GM12878 (cell line): ENCODE measurements at regions of chr4 and their contacts with region 1.

Region 1: DNA sequence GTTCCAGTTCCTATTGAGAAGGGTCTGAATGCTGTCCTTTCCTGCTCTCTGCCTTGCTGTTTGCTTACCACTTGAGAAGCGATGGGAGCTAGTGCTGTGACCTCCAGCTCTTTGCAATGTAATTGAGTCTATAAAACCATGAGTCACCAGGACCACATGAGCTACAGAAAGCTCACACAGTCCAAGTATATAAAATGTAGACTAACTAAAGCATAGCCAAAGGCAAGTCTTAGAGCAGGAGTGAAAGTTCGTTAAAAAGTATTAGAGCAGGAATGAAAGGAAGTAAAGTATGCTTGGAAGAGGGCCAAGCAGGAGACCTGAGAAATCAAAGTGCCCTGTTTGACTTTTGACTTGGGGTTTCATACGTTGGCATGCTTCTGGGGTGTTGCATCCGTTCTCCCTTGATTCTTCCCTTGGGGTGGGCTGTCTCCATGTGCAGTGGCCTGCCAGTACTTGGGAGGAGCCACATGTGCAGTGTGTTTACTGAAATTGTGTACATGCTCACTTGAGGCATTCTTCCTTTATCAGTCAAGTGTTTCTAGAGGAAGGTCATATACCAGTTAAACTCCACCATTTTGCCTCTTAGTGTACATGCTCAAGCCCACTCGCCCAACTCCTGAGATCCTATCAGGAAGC is 71.3 kb upstream of the KIT start:
- DNase-seq: no peak
- ATAC-seq: no peak
- H3K4me3 ChIP-seq: no peak overlapping the region
- H3K27ac ChIP-seq: no peak overlapping the region
- H3K4me1 ChIP-seq: no peaks in the 10 kb centered on the region
- H3K27me3 ChIP-seq: no peaks in the 10 kb centered on the region; a peak in 1 of 4 replicates
- CTCF ChIP-seq: no peak
- EP300 ChIP-seq: no peak
- POLR2A ChIP-seq: no peak
- RAD21 ChIP-seq: no peak

Region 2: DNA sequence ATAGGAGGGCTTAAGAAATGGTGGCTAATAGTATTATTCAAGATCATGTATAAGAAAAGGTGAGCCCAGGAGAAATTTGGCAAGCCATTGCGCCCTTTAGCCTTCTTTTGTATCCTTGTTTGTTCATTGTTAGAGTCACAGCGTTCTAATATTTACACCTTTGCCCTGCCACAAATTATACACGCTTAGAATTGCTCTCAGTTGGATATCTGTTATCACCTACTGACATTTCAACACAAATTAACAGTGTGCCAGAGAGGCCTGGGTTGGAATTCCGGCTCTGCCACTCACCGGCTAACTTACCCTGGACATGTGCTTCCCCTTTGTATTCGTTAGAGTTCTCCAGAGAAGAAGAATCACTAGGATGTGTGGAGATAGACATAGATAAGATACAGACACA is 77.4 kb before region 1 on chr4:
- CTCF ChIA-PET with region 1: no interaction called
- POLR2A ChIA-PET with region 1: no interaction called
- RAD21 ChIA-PET with region 1: no interaction called
- SMC1A ChIA-PET with region 1: no interaction called
- in situ Hi-C with region 1: no loop called
- intact Hi-C with region 1: no loop called
- DNase-seq: no peak
- ATAC-seq: no peak
- H3K4me3 ChIP-seq: no peak overlapping the region
- H3K27ac ChIP-seq: no peak overlapping the region
- H3K4me1 ChIP-seq: no peaks in the 10 kb centered on the region
- H3K27me3 ChIP-seq: no peaks in the 10 kb centered on the region
- CTCF ChIP-seq: no peak
- EP300 ChIP-seq: no peak
- POLR2A ChIP-seq: no peak
- RAD21 ChIP-seq: no peak

Region 3: GRCh38 chr4:54566608-54567007 is 19.8 kb before region 1 on chr4:
- CTCF ChIA-PET with region 1: no interaction called
- POLR2A ChIA-PET with region 1: no interaction called
- RAD21 ChIA-PET with region 1: no interaction called
- SMC1A ChIA-PET with region 1: no interaction called
- in situ Hi-C with region 1: no loop called
- intact Hi-C with region 1: no loop called
- DNase-seq: no peak
- ATAC-seq: peak; percentile 39
- H3K4me3 ChIP-seq: no peak overlapping the region
- H3K27ac ChIP-seq: no peak overlapping the region
- H3K4me1 ChIP-seq: no peaks in the 10 kb centered on the region
- H3K27me3 ChIP-seq: peaks cover 0 to 5% of the 10 kb centered on the region in 2 experiments; a peak in 2 of 4 replicates
- CTCF ChIP-seq: no peak
- EP300 ChIP-seq: no peak
- POLR2A ChIP-seq: no peak
- RAD21 ChIP-seq: no peak

Region 4: GRCh38 chr4:54645830-54646229 is 59.4 kb after region 1 on chr4:
- CTCF ChIA-PET with region 1: no interaction called
- POLR2A ChIA-PET with region 1: no interaction called
- RAD21 ChIA-PET with region 1: no interaction called
- SMC1A ChIA-PET with region 1: no interaction called
- in situ Hi-C with region 1: loop called (anchors 10 kb)
- intact Hi-C with region 1: no loop called
- DNase-seq: no peak
- ATAC-seq: no peak
- H3K4me3 ChIP-seq: no peak overlapping the region
- H3K27ac ChIP-seq: no peak overlapping the region
- H3K4me1 ChIP-seq: no peaks in the 10 kb centered on the region
- H3K27me3 ChIP-seq: no peaks in the 10 kb centered on the region
- CTCF ChIP-seq: no peak
- EP300 ChIP-seq: no peak
- POLR2A ChIP-seq: no peak
- RAD21 ChIP-seq: no peak

Region 5: GRCh38 chr4:54657551-54658251 is 71.3 kb after region 1 on chr4 and contains the start of gene KIT:
- CTCF ChIA-PET with region 1: no interaction called
- POLR2A ChIA-PET with region 1: no interaction called
- RAD21 ChIA-PET with region 1: no interaction called
- SMC1A ChIA-PET with region 1: no interaction called
- in situ Hi-C with region 1: no loop called
- intact Hi-C with region 1: no loop called
- DNase-seq: no peak
- ATAC-seq: no peak
- H3K4me3 ChIP-seq: peak within 1 kb of the TSS; percentile 16; the same call in 1 of the 2 replicates
- H3K27ac ChIP-seq: no peak within 1 kb of the TSS
- H3K4me1 ChIP-seq: no peaks in the 10 kb centered on the region
- H3K27me3 ChIP-seq: peaks cover 13 to 22% of the 10 kb centered on the region in 2 experiments
- CTCF ChIP-seq: no peak
- EP300 ChIP-seq: no peak
- POLR2A ChIP-seq: no peak
- RAD21 ChIP-seq: no peak
- polyA plus RNA-seq, gene KIT: not detected